Sciatic nerve (tissue), 2 donors: ENCODE measurements at regions of chrX and their contacts with region 1.

Region 1: GRCh38 chrX:31092476-31092875 is 20.6 kb upstream of the FTHL17 start:
- DNase-seq: no peak
- ATAC-seq: no peak

Region 2: GRCh38 chrX:31126205-31126604 is 33.7 kb after region 1 on chrX:
- intact Hi-C with region 1: no loop called
- DNase-seq: no peak
- ATAC-seq: no peak

Region 3: GRCh38 chrX:31154946-31155345 is 62.5 kb after region 1 on chrX:
- intact Hi-C with region 1: loop called (anchors 2 kb)
- DNase-seq: no peak
- ATAC-seq: no peak